ENCODE measurements at regions of chr9 and their contacts with region 1.

Region 1: DNA sequence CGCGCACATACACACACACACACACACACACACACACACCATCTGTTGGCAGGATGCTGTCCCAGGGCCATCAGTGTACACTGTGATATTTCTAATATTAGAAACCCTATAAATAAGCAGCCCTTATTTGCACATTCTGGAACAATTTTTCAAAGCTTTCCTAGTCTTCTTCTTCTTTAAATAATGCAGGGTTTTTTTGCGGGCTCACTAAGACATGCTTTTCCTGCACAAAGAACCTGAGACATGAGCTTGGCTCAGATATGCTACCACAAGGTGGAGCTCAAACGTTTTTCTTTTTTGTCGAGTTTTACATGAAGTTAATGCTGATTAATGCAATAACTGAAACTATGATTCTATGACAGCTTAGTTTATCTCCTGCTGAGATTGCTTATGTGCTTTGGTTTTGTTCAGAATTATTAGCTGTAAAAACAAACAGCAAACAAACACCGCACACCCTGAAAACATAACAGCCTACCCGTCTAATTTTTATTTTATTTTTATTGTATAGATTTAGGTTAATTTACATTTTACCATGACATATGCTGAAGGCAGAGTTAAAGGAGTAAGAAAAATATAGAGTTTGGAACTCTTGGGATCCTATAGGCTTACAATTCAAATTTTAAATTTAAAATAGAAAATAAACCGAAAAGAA is 95.8 kb downstream of the ALDH1A1 start:
- DNase-seq: peak; percentile 29
- H3K4me3 ChIP-seq: no peak overlapping the region
- CTCF ChIP-seq: peak; percentile 46

Region 2: DNA sequence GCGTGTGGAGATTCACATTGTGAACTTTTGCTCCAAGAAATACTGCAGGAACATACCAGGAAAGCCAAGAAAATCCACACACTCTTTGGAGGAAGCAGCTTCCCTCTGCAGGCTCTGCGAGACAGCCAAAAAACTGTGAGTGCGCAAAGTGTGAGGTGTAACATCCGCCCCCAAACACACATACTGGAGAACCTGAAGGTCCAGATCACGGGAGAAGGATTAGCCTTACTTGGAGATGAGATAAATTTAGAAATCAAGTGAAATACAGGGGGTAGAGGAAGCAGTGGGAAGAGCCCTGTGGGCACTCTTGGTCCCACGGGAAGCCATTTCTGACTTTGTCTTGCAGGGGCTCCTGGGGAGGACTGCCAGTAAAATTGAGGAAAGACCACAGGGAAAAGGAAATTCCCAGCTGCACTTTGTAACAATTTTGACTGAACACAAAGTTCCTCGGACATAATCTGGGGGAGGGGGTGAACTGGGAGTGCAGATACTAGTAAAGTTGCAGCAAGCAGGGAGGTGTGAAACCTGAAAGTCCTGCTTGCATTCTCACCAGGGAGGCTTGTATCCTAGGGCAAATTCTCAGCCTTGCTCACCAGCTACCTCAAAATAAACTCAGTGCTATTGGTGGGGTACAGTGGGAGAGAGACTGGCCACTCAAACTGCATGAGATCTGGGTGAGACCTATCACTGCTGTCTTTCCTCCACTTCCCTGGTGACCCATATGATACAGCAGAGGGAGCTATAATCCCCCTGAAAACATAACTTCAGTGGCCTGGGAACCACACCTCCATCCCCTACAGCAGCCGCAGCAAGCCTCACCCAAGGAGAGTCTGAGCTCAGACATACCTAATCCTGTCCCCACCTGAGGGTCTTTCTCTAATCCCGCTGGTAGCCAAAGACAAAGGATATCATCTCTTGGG is 13.3 kb before region 1 on chr9:
- CTCF ChIA-PET with region 1: interaction called, 21 read pairs
- POLR2A ChIA-PET with region 1: no interaction called
- DNase-seq: no peak
- H3K4me3 ChIP-seq: no peak overlapping the region
- CTCF ChIP-seq: no peak

Region 3: DNA sequence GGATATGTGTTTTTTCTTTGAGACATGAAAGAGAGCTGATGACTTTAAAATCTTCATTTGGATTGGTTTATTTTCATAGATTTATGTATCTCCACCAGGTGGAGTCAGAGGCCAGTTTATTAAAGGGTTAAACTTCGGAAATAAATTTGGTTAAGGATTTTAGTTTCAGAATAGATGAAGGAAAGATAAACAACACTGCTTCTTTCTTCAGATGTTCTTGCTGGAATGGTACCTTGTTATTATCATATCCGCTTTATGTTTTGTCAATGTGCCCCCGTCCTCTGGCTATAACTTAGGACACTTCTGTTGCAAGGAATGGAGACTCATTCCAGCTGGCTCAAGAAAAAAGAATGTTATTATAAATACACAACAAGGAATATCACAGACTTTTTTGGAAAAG is 14.6 kb after region 1 on chr9:
- CTCF ChIA-PET with region 1: interaction called, 15 read pairs
- POLR2A ChIA-PET with region 1: no interaction called
- DNase-seq: no peak
- H3K4me3 ChIP-seq: no peak overlapping the region
- CTCF ChIP-seq: no peak

Region 4: DNA sequence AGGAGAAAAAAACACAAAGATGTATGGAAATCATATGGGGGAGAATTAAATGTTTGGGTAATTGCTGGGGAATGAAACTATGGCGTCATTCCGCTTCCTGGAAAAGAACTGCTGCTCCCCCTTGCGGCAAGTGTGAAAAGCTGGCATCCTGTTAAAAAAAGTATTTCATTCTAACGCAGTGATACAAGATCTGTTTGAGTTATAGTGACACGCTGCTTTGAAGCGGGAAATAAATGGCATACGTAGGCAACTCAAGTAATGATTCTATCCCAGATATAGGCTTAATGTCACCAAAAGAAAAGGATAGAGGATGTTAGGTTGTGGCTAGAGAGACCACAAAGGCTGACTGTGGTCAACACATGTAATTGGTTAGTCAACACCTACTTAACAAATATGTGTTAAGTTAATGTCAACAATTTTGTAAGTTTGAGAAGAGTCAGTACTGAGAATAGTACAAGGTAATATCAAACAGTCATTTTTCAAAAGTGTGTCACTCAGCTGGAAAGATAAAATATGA is 166.0 kb after region 1 on chr9:
- CTCF ChIA-PET with region 1: interaction called, 64 read pairs
- POLR2A ChIA-PET with region 1: no interaction called
- DNase-seq: peak; percentile 9
- H3K4me3 ChIP-seq: no peak overlapping the region
- CTCF ChIP-seq: peak; percentile 75

Region 5: GRCh38 chr9:73081979-73082657 is 225.0 kb after region 1 on chr9:
- CTCF ChIA-PET with region 1: interaction called, 94 read pairs
- POLR2A ChIA-PET with region 1: no interaction called
- DNase-seq: no peak
- H3K4me3 ChIP-seq: no peak overlapping the region
- CTCF ChIP-seq: peak; percentile 66

Region 6: DNA sequence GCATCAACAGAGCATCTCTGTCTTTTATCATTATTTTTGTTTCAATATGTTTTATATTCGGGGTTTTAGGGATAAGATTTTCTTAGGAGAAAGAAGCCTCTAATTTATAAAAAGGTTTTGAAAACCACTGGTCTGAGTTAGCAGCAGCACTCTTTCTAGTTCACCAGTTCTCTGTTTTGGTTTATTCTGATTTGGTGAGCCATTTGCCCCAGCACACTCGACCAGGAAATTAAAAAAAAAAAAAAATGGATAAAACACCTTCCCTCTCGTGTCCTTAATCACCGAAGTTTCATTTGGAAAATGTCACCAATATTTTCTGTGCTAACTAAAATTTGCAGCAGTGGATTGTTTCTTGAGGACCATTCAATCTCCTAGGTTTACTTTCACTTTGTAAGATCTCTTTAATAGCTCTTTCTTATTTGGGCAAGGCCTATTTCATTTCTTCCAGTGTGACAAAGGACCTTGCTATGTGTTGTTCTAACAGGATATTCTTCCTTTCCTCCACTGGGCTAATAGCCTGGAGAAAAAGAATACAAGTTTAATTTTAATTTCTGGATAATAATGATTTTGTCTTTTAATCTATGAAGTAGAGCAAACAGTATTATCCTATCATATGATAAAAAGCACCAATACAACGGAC is 236.8 kb after region 1 on chr9:
- CTCF ChIA-PET with region 1: interaction called, 18 read pairs
- POLR2A ChIA-PET with region 1: no interaction called
- DNase-seq: no peak
- H3K4me3 ChIP-seq: no peak overlapping the region
- CTCF ChIP-seq: no peak